GM12878 (cell line): ENCODE measurements at regions of chr11 and their contacts with region 1.

Region 1: DNA sequence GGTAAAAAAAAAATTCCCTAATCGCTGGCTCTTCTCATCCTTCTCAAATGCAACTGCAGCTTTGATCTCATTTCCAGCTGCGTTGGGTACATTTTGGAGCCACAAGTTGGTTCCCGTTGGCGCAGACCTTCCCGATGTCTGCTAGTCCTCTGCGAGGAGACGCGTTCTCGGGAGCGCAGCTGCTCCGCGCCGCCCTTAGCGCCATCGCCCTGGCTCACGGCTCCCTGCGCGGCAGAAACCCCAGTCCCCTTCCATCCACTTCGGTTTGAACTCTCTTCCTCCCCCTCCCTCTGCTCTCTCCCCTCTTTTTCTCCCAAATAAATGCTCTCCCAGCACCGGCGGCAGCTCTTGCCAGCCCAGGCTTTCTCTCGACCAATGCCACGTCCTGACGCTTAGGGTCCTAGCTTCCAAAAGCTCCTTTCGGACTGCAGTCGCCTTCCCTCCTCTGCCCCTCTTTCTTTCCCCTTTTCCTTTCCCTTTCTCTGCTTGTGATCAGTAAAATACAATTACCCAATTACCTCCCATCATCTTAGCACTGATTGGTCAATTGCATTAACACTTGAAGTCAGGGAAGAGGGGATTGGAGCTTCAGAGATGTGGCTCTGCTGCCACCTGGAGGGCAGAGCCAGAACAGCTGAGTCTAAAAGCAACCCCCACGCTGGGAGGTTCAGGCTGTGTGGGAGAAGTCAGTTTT is 1165.7 kb downstream of the LRRC4C start:
- DNase-seq: peak; percentile 30
- ATAC-seq: peak; percentile 99
- H3K4me3 ChIP-seq: no peak overlapping the region
- H3K27ac ChIP-seq: no peak overlapping the region
- H3K4me1 ChIP-seq: no peaks in the 10 kb centered on the region
- H3K27me3 ChIP-seq: no peaks in the 10 kb centered on the region; a peak in 1 of 4 replicates
- CTCF ChIP-seq: peak; percentile 78 to 92 (median 88); a peak in 5 of 6 replicates
- EP300 ChIP-seq: no peak
- POLR2A ChIP-seq: no peak
- RAD21 ChIP-seq: peak; percentile 73

Region 2: GRCh38 chr11:39361557-39361956 is 932.2 kb before region 1 on chr11:
- CTCF ChIA-PET with region 1: interaction called, 5 read pairs
- POLR2A ChIA-PET with region 1: no interaction called
- RAD21 ChIA-PET with region 1: no interaction called
- SMC1A ChIA-PET with region 1: no interaction called
- in situ Hi-C with region 1: no loop called
- intact Hi-C with region 1: loop called (anchors 2 kb)
- DNase-seq: no peak
- ATAC-seq: no peak
- H3K4me3 ChIP-seq: no peak overlapping the region
- H3K27ac ChIP-seq: no peak overlapping the region
- H3K4me1 ChIP-seq: no peaks in the 10 kb centered on the region
- H3K27me3 ChIP-seq: no peaks in the 10 kb centered on the region
- CTCF ChIP-seq: no peak
- EP300 ChIP-seq: no peak
- POLR2A ChIP-seq: no peak
- RAD21 ChIP-seq: no peak

Region 3: GRCh38 chr11:40129266-40129665 is 164.5 kb before region 1 on chr11:
- CTCF ChIA-PET with region 1: interaction called, 20 read pairs
- POLR2A ChIA-PET with region 1: no interaction called
- RAD21 ChIA-PET with region 1: interaction called, 8 read pairs
- SMC1A ChIA-PET with region 1: interaction called, 9 read pairs
- in situ Hi-C with region 1: no loop called
- intact Hi-C with region 1: loop called (anchors 1 kb)
- DNase-seq: no peak
- ATAC-seq: peak; percentile 55; the same call in 2 of the 3 replicates
- H3K4me3 ChIP-seq: no peak overlapping the region
- H3K27ac ChIP-seq: no peak overlapping the region
- H3K4me1 ChIP-seq: no peaks in the 10 kb centered on the region
- H3K27me3 ChIP-seq: no peaks in the 10 kb centered on the region
- CTCF ChIP-seq: peak; percentile 19 to 51 (median 19); a peak in 3 of 6 replicates
- EP300 ChIP-seq: no peak
- POLR2A ChIP-seq: no peak
- RAD21 ChIP-seq: peak; percentile 22; the same call in 1 of the 2 replicates

Region 4: DNA sequence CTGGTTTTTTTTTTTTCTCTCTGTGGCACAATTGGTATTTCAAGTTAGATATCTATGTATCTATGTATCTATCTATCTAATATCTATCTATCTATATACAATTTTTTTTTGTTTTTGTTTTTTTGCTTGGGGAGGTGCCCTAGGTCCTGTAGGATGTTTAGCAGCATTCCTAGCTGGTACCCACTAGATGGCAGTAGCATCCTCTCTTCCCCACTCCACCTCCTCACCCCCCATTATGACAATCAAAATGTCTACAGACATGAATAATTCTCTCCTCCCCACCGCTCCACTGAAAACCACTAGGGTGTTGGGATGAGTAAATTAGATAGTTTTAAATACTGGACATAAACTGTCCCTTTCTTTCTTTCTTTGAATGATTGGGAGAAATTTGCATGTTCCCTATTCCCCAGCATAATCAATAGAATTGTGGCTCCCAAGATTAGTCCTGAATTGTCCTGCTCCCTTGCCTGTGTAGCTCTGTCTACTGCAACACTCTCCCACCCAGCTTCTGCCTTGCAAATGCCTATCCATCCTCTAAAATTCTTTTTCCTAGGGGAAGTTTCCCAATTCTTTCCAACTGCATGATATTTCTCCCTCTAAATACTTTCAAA is 13.2 kb after region 1 on chr11:
- CTCF ChIA-PET with region 1: interaction called, 18 read pairs
- POLR2A ChIA-PET with region 1: no interaction called
- RAD21 ChIA-PET with region 1: interaction called, 6 read pairs
- SMC1A ChIA-PET with region 1: interaction called, 8 read pairs
- in situ Hi-C with region 1: no loop called
- intact Hi-C with region 1: no loop called
- DNase-seq: no peak
- ATAC-seq: peak; percentile 88
- H3K4me3 ChIP-seq: no peak overlapping the region
- H3K27ac ChIP-seq: no peak overlapping the region
- H3K4me1 ChIP-seq: no peaks in the 10 kb centered on the region
- H3K27me3 ChIP-seq: no peaks in the 10 kb centered on the region
- CTCF ChIP-seq: peak; percentile 45 to 65 (median 54)
- EP300 ChIP-seq: no peak
- POLR2A ChIP-seq: no peak
- RAD21 ChIP-seq: peak; percentile 57

Region 5: GRCh38 chr11:40337118-40337517 is 43.3 kb after region 1 on chr11:
- CTCF ChIA-PET with region 1: no interaction called
- POLR2A ChIA-PET with region 1: no interaction called
- RAD21 ChIA-PET with region 1: no interaction called
- SMC1A ChIA-PET with region 1: no interaction called
- in situ Hi-C with region 1: no loop called
- intact Hi-C with region 1: no loop called
- DNase-seq: no peak
- ATAC-seq: no peak
- H3K4me3 ChIP-seq: no peak overlapping the region
- H3K27ac ChIP-seq: no peak overlapping the region
- H3K4me1 ChIP-seq: no peaks in the 10 kb centered on the region
- H3K27me3 ChIP-seq: no peaks in the 10 kb centered on the region
- CTCF ChIP-seq: no peak
- EP300 ChIP-seq: no peak
- POLR2A ChIP-seq: no peak
- RAD21 ChIP-seq: no peak